ENCODE measurements at regions of chr15 and their contacts with region 1.

Region 1: DNA sequence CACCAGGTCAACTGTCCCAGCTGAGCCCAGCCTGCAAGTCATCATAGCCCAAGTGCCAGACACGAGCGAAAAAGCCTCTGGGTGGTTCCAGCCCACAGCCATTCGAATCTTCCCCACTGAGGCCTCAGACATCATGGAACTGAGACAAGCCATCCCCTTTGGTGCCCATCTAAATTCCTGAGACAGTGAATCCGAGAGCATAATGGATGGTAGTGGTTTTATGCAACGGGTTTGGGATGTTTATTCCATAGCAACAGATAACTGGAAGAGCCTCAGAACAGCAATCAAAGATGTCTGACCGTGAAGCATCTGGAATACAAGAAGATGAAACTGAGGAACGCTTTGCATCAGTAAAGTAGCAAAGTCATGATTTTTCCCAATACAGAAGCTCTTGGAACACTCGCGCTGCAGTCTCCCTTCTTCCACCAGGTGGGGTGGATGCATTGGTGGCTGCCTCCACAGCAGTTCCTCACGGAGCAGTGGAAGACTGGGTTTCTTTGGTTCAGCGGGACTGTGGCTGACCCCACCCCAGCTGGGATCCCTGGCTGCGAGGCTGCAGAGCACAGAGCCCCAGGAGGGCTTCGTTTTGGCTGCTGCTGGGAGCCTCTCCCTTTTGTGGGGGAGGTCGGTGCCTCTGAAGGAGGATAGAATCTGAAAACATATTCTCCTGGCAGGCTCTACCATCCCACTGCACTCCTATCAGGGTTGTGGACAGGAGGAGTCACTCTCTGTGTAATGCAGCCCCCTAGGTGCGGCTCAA is 26.4 kb upstream of the PDE8A start:
- DNase-seq: peak; percentile 84
- H3K4me3 ChIP-seq: no peak overlapping the region
- H3K27ac ChIP-seq: no peak overlapping the region
- H3K4me1 ChIP-seq: peaks cover 24% of the 10 kb centered on the region
- H3K27me3 ChIP-seq: no peaks in the 10 kb centered on the region
- CTCF ChIP-seq: peak; percentile 80 to 91
- POLR2A ChIP-seq: no peak

Region 2: DNA sequence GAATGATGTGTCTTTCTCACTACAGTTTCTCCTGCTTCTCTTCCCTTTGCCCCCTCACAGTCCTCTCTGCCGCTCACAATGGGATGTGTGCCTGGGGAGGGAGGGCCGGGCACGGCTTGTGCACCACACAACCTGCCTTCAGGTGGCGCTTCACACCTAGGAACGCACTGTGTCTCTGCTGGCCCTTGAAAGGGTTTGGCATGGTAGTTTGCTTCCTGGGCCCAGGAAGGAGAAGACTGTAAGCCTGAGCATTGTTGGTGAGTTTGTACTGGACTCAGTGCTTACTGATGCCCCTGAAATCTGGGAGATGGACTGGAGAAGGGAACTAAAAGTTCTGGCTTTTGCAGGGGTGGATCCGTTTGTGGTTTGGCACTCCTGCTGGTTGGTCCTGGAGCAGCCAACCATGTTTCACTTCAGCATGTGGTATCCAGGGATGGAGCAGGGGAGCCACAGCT is 128.9 kb before region 1 on chr15:
- CTCF ChIA-PET with region 1: no interaction called
- POLR2A ChIA-PET with region 1: no interaction called
- dilution Hi-C with region 1: loop called (anchors 25 kb)
- intact Hi-C with region 1: no loop called
- DNase-seq: no peak
- H3K4me3 ChIP-seq: no peak overlapping the region
- H3K27ac ChIP-seq: no peak overlapping the region
- H3K4me1 ChIP-seq: peaks cover 7% of the 10 kb centered on the region
- H3K27me3 ChIP-seq: no peaks in the 10 kb centered on the region
- CTCF ChIP-seq: peak in 1 of 2 donors; percentile 20
- POLR2A ChIP-seq: no peak

Region 3: GRCh38 chr15:85005319-85005718 is 50.0 kb after region 1 on chr15:
- CTCF ChIA-PET with region 1: interaction called, 70 read pairs
- POLR2A ChIA-PET with region 1: no interaction called
- dilution Hi-C with region 1: no loop called
- intact Hi-C with region 1: loop called (anchors 2 kb)
- DNase-seq: no peak
- H3K4me3 ChIP-seq: no peak overlapping the region
- H3K27ac ChIP-seq: no peak overlapping the region
- H3K4me1 ChIP-seq: peaks cover 11% of the 10 kb centered on the region
- H3K27me3 ChIP-seq: no peaks in the 10 kb centered on the region
- CTCF ChIP-seq: peak in 1 of 2 donors; percentile 4
- POLR2A ChIP-seq: no peak

Region 4: DNA sequence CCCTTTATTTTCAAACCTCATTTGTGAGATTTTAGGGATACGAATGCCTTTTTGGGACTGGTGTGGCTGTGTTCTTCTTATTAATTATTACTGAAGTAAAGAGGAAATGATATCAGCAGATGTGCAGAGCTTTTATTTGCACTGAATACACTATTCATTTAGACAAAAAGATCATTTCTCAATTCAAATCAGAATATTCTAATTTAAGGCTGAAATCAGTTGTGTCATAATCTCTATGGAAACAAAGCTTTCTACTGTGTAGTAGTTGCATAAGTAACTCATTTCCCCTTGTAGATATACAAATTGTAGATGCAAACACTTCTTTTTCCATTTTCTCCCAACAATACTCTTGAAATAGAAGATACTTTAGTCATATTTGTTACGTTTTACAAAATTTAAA is 82.4 kb after region 1 on chr15:
- CTCF ChIA-PET with region 1: interaction called, 11 read pairs
- POLR2A ChIA-PET with region 1: no interaction called
- dilution Hi-C with region 1: no loop called
- intact Hi-C with region 1: no loop called
- DNase-seq: no peak
- H3K4me3 ChIP-seq: no peak overlapping the region
- H3K27ac ChIP-seq: no peak overlapping the region
- H3K4me1 ChIP-seq: peaks cover 4% of the 10 kb centered on the region
- H3K27me3 ChIP-seq: no peaks in the 10 kb centered on the region
- CTCF ChIP-seq: no peak
- POLR2A ChIP-seq: no peak

Region 5: DNA sequence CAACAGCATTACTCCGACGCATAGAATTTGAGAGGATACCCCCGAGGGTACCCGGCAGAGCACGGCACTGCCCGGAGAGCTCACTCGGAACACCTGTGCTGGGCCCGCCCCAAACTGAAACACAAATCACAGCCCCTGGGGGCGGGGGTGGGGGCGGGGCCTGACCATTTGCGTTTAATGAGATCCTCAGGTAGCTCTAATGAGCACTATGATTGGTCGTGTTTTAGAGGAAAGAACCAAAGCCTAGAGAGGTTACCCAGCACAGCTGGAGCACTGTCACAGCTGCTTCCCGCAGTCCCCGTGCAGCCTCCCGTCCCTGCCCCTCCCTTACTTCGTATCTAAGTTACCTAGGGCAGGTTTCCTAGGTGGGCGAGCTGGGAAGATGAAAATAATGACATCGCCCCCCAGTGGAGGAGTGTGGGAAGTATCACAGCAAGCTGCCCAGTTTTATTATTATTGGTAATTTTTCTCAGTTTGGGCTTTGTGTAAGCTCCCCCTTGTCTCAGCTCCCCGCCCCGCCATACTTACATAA is 213.4 kb after region 1 on chr15:
- CTCF ChIA-PET with region 1: interaction called, 45 read pairs
- POLR2A ChIA-PET with region 1: no interaction called
- dilution Hi-C with region 1: no loop called
- intact Hi-C with region 1: loop called (anchors 1 kb)
- DNase-seq: peak; percentile 55
- H3K4me3 ChIP-seq: peak overlapping the region in 2 of 3 experiments; percentile 10 to 32
- H3K27ac ChIP-seq: no peak overlapping the region
- H3K4me1 ChIP-seq: no peaks in the 10 kb centered on the region
- H3K27me3 ChIP-seq: no peaks in the 10 kb centered on the region
- CTCF ChIP-seq: peak; percentile 58 to 63
- POLR2A ChIP-seq: no peak